CD8-positive, alpha-beta T cell (primary cell): ENCODE measurements at regions of chr19 and their contacts with region 1.

Region 1: GRCh38 chr19:1812469-1813196 is 557 bp upstream of the ATP8B3 start:
- DNase-seq: peak; percentile 62 to 91 (median 81)
- ATAC-seq: peak; percentile 76
- H3K4me3 ChIP-seq: peak overlapping the region; percentile 72 to 77
- H3K4me3 Mint-ChIP-seq: peak overlapping the region; percentile 91
- H3K27ac ChIP-seq: peak overlapping the region; percentile 34 to 45
- H3K27ac Mint-ChIP-seq: peak overlapping the region; percentile 87
- H3K4me1 ChIP-seq: peaks cover 12% of the 10 kb centered on the region
- H3K4me1 Mint-ChIP-seq: peaks cover 13% of the 10 kb centered on the region
- H3K27me3 ChIP-seq: no peaks in the 10 kb centered on the region
- H3K27me3 Mint-ChIP-seq: no peaks in the 10 kb centered on the region
- CTCF ChIP-seq: peak; percentile 65

Region 2: DNA sequence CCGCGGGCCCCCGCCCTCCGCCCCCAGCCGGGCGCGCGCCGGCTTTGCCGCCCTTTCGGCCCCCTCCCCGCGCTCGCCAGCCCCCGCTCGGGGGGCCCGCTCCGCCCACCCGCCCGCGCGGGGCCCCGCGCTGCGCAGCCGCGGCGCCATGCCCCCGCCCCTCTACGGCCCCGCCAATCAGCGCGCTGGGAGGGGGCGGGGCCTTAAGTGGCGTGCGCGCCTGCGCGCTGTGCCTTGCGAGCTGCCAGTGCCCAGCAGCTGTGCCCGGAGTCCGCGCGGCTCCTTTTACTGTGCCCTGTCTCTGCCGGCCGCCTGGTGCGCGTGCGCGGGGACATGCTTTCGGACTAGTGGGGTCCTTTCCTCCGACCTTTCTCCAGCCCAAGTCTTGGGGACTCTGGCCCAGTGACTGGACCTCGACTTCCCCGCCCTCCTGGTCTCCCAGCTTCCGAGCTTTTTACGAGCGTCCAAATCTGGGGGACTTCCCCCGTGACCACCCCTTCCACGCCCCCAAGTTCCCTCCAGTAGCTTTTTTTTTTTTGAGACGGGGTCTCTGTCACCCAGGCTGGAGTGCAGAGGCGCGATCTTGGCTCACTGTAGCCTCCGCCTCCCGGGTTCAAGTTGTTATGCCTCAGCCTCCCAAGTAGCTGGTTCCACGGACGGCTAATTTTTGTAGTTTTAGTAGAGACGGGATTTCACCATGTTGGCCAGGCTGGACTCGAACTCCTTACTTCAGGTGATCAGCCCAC is 219.7 kb before region 1 on chr19 and contains the start of gene MBD3:
- CTCF ChIA-PET with region 1: no interaction called
- POLR2A ChIA-PET with region 1: no interaction called
- intact Hi-C with region 1: loop called in 1 of 2 experiments (anchors 1 kb)
- DNase-seq: peak; percentile 72 to 95 (median 84)
- ATAC-seq: peak; percentile 89
- H3K4me3 ChIP-seq: peak within 1 kb of the TSS; percentile 80 to 95
- H3K4me3 Mint-ChIP-seq: peak within 1 kb of the TSS; percentile 88
- H3K27ac ChIP-seq: peak within 1 kb of the TSS; percentile 84 to 88
- H3K27ac Mint-ChIP-seq: peak within 1 kb of the TSS; percentile 91
- H3K4me1 ChIP-seq: peaks cover 18% of the 10 kb centered on the region
- H3K4me1 Mint-ChIP-seq: peaks cover 22% of the 10 kb centered on the region
- H3K27me3 ChIP-seq: no peaks in the 10 kb centered on the region
- H3K27me3 Mint-ChIP-seq: no peaks in the 10 kb centered on the region
- CTCF ChIP-seq: no peak
- total RNA-seq, gene MBD3: 31.0 to 37.2 TPM

Region 3: DNA sequence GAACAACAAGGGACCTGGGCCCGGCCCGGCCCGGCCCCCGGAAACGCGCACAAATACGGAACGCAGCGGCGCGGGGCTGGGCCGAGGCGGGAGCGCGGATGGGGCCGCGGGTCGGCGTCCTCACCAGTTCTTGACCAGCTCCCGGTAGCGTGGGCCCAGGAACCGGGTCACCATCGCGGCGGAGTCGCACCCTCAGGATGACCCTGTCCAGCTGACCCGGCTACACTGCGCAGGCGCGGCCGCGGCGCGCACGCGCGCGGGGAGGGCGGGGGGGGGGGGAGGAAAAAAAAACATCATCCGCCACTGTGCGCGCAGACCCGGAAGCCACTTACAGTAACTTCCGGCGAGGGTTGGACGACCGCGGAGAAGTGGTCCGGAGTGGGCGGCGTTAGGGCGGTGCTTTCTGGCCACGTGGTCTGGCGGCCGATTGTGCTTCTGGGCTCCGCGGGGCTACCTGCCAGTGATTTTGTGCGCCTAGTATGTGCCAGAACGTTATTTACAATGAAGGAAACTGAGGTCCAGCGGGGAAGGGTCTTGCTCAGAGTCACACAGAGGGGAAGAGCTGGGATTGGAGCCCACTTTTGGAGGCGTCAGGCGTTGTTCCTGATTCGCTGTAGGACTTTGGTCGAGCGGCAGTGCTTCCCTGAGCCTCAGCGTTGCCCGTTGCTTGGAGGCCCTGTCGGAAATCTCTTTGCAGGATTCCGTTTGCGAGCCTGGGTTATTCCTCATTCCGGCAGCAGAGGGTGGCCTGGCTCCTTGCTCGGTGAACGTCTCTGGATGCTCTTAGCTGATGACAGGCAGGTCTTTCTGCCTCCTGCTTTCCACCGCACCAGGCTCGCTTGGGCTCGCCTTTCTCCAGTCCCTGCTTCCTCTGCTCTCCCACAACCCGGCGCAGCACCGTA is 207.1 kb before region 1 on chr19 and contains the start of gene UQCR11:
- CTCF ChIA-PET with region 1: no interaction called
- POLR2A ChIA-PET with region 1: no interaction called
- intact Hi-C with region 1: loop called in 1 of 2 experiments (anchors 1 kb)
- DNase-seq: peak; percentile 76 to 96 (median 93)
- ATAC-seq: peak; percentile 83
- H3K4me3 ChIP-seq: peak within 1 kb of the TSS; percentile 76 to 100
- H3K4me3 Mint-ChIP-seq: peak within 1 kb of the TSS; percentile 99
- H3K27ac ChIP-seq: peak within 1 kb of the TSS; percentile 72 to 82
- H3K27ac Mint-ChIP-seq: peak within 1 kb of the TSS; percentile 99
- H3K4me1 ChIP-seq: peaks cover 51% of the 10 kb centered on the region
- H3K4me1 Mint-ChIP-seq: peaks cover 55% of the 10 kb centered on the region
- H3K27me3 ChIP-seq: no peaks in the 10 kb centered on the region
- H3K27me3 Mint-ChIP-seq: no peaks in the 10 kb centered on the region
- CTCF ChIP-seq: peak; percentile 90
- total RNA-seq, gene UQCR11: 97.1 to 98.0 TPM

Region 4: GRCh38 chr19:1789261-1790041 is 23.2 kb before region 1 on chr19:
- CTCF ChIA-PET with region 1: interaction called, 9 read pairs
- POLR2A ChIA-PET with region 1: no interaction called
- intact Hi-C with region 1: loop called (anchors 1 kb)
- DNase-seq: no peak
- ATAC-seq: no peak
- H3K4me3 ChIP-seq: no peak overlapping the region
- H3K4me3 Mint-ChIP-seq: no peak overlapping the region
- H3K27ac ChIP-seq: no peak overlapping the region
- H3K27ac Mint-ChIP-seq: no peak overlapping the region
- H3K4me1 ChIP-seq: no peaks in the 10 kb centered on the region
- H3K4me1 Mint-ChIP-seq: no peaks in the 10 kb centered on the region
- H3K27me3 ChIP-seq: peaks cover 0 to 5% of the 10 kb centered on the region in 2 experiments
- H3K27me3 Mint-ChIP-seq: peaks cover 10% of the 10 kb centered on the region
- CTCF ChIP-seq: no peak

Region 5: DNA sequence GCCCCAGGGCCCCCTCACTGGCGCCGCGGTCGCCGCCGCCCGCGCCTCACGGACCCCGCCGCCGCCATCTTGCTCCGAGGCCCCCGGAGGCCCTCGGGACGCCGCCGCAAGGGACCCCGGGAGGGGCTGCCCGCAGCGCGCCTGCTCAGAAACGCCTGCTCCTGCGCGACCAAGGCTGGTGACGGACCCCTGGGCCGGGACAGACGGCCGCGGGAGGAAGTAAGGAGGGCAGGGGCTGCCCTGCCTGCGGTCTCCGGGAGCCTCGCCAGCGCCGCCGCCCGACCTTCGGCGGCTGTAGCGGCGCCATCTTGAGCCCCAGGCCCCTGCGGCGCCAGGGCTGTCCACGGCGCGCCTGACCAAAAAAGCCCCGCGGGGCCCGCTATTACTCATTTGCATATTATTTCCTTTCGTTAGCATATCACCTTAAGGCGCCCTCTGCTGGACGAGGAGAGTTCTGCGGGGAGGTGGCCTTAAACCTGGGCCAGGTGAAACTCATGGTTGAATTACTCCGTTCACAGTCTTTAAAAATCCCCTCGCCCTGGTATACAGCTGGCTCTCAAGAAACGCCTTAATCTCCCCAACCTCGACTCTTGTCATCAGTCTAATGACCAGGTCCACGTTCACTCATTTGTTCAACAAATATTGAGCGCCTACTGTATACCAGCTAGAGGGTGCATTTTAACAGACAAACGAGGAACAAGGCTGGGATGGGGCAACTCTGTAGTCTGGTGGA is 35.9 kb after region 1 on chr19 and contains the start of gene REXO1:
- CTCF ChIA-PET with region 1: no interaction called
- POLR2A ChIA-PET with region 1: no interaction called
- intact Hi-C with region 1: loop called in 1 of 2 experiments (anchors 1 kb)
- DNase-seq: peak; percentile 96 to 99 (median 97)
- ATAC-seq: peak; percentile 76
- H3K4me3 ChIP-seq: peak within 1 kb of the TSS; percentile 86 to 90
- H3K4me3 Mint-ChIP-seq: peak within 1 kb of the TSS; percentile 88
- H3K27ac ChIP-seq: peak within 1 kb of the TSS; percentile 93 to 97
- H3K27ac Mint-ChIP-seq: peak within 1 kb of the TSS; percentile 93
- H3K4me1 ChIP-seq: peaks cover 72% of the 10 kb centered on the region
- H3K4me1 Mint-ChIP-seq: peaks cover 56% of the 10 kb centered on the region
- H3K27me3 ChIP-seq: no peaks in the 10 kb centered on the region
- H3K27me3 Mint-ChIP-seq: no peaks in the 10 kb centered on the region
- CTCF ChIP-seq: peak; percentile 91
- total RNA-seq, gene REXO1: 143 to 152 TPM